MCF 10A (cell line): ENCODE measurements at regions of chr12 and their contacts with region 1.

Region 1: GRCh38 chr12:91818227-91819131 is 327.2 kb downstream of the BTG1 start:
- DNase-seq: peak; percentile 18
- H3K4me3 Mint-ChIP-seq: peak overlapping the region; percentile 8
- H3K27ac Mint-ChIP-seq: peak overlapping the region; percentile 42
- H3K4me1 Mint-ChIP-seq: peaks cover 31% of the 10 kb centered on the region
- H3K27me3 Mint-ChIP-seq: no peaks in the 10 kb centered on the region
- CTCF ChIP-seq: no peak

Region 2: DNA sequence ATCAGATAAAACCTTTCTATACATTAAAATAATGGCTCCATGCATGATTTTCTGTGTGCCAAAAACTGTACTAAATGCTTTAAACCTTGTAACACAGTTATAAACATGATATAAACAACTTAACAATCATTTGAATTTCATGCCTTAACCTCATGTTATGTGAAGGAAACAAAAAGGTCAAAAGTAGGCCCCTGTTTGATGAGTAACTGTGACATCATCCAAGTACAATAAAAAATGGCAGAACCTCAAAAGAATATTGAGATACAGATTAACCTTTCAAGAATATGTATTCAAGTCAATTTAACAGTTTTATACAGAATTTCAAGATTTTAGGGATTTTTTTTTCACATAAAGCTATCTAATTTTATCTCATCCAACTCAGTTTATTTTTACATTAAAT is 325.2 kb before region 1 on chr12:
- CTCF ChIA-PET with region 1: no interaction called
- POLR2A ChIA-PET with region 1: no interaction called
- intact Hi-C with region 1: no loop called
- DNase-seq: peak; percentile 3
- H3K4me3 Mint-ChIP-seq: no peak overlapping the region
- H3K27ac Mint-ChIP-seq: no peak overlapping the region
- H3K4me1 Mint-ChIP-seq: no peaks in the 10 kb centered on the region
- H3K27me3 Mint-ChIP-seq: no peaks in the 10 kb centered on the region
- CTCF ChIP-seq: no peak

Region 3: GRCh38 chr12:91704446-91704845 is 114.0 kb before region 1 on chr12:
- CTCF ChIA-PET with region 1: no interaction called
- POLR2A ChIA-PET with region 1: interaction called, 14 read pairs
- intact Hi-C with region 1: no loop called
- DNase-seq: peak; percentile 89
- H3K4me3 Mint-ChIP-seq: no peak overlapping the region
- H3K27ac Mint-ChIP-seq: peak overlapping the region; percentile 62
- H3K4me1 Mint-ChIP-seq: peaks cover 26% of the 10 kb centered on the region
- H3K27me3 Mint-ChIP-seq: no peaks in the 10 kb centered on the region
- CTCF ChIP-seq: no peak

Region 4: DNA sequence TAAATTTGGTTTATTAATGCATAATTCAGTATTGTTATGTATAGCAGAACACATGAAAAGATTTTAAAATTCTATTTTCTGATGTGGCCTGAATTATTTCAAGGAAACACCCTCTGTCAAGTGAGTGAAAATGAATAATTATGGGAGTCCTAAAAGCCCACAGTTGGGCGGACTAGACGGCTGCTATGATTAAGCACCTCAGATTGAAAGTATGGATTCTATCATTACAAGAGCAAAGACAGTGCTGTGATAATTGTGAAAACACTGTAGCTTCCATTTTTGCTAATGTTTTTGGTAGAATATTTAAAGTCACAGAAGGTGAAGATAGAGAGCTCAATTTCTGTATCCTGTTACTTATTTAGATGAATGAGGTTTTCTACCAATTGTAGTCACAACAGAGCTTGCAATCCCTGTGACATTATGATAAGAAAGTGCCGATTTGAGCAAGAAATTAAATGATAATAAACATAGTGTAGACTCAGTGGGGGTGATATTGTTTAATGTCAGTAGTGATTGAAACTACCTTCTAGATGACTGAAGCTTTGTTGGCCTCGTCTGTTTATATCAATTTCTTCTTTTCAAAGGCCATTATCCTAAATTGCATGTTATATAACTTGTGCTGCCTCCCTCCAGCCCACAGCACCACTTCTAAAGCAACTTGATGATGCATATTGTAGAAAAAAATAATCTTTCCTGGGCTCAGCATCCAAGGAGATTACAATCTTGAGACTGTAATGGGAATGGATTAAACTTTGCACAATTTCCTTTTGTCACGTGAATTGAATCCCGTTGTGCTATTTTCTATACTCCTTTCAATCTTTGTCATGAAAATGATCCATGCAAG is 32.6 kb before region 1 on chr12:
- CTCF ChIA-PET with region 1: no interaction called
- POLR2A ChIA-PET with region 1: interaction called, 107 read pairs
- intact Hi-C with region 1: no loop called
- DNase-seq: no peak
- H3K4me3 Mint-ChIP-seq: no peak overlapping the region
- H3K27ac Mint-ChIP-seq: no peak overlapping the region
- H3K4me1 Mint-ChIP-seq: no peaks in the 10 kb centered on the region
- H3K27me3 Mint-ChIP-seq: no peaks in the 10 kb centered on the region
- CTCF ChIP-seq: no peak

Region 5: DNA sequence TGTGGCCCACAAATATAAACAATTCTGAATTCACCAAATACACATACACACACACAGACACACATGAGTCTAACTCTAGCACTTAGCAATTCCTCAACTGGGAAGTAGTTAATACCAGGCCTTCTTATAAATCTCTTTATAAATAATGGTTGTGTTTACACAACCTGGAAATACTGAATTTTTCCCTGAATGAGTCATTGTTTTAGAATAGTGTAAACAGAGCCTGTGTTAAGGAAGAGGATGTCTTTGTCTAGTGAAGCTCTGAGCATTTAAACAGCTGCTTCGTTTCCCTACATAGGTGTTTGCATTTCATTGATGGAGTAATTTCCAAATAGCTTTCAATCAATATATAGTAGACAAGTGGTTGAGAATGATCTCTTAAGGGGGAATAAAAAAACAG is 108.4 kb after region 1 on chr12:
- CTCF ChIA-PET with region 1: interaction called, 5 read pairs
- POLR2A ChIA-PET with region 1: interaction called, 30 read pairs
- intact Hi-C with region 1: no loop called
- DNase-seq: peak; percentile 57
- H3K4me3 Mint-ChIP-seq: no peak overlapping the region
- H3K27ac Mint-ChIP-seq: peak overlapping the region; percentile 75
- H3K4me1 Mint-ChIP-seq: peaks cover 18% of the 10 kb centered on the region
- H3K27me3 Mint-ChIP-seq: no peaks in the 10 kb centered on the region
- CTCF ChIP-seq: no peak

Region 6: DNA sequence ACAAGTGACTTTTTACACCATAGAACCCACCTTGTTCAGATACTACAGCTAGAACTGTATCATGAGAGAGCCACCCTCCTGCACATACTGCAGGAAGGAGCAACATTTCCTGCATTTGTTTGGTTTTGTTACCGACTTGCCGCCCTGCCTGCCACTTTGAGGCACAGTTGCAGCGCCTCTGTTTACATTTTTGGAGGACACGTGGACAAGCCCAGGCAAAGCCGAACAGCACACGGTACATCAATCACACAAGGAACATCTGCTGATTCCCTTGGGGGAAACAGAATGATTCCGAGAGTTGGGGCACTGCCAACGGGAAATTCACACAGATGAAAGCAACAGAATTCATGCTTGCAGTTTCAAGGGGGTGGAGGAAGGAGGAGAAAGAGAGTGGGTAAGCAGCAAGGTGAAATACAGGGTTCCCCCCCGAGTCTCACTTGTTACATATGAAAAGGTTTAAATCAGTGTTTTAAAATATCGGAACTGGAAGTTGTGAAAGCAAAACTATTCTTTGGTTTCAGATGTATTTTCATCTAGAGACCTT is 216.5 kb after region 1 on chr12:
- CTCF ChIA-PET with region 1: no interaction called
- POLR2A ChIA-PET with region 1: interaction called, 32 read pairs
- intact Hi-C with region 1: no loop called
- DNase-seq: peak; percentile 95
- H3K4me3 Mint-ChIP-seq: peak overlapping the region; percentile 76
- H3K27ac Mint-ChIP-seq: peak overlapping the region; percentile 96
- H3K4me1 Mint-ChIP-seq: peaks cover 53% of the 10 kb centered on the region
- H3K27me3 Mint-ChIP-seq: no peaks in the 10 kb centered on the region
- CTCF ChIP-seq: no peak